Mammary epithelial cell (primary cell): ENCODE measurements at regions of chr3 and their contacts with region 1.

Region 1: DNA sequence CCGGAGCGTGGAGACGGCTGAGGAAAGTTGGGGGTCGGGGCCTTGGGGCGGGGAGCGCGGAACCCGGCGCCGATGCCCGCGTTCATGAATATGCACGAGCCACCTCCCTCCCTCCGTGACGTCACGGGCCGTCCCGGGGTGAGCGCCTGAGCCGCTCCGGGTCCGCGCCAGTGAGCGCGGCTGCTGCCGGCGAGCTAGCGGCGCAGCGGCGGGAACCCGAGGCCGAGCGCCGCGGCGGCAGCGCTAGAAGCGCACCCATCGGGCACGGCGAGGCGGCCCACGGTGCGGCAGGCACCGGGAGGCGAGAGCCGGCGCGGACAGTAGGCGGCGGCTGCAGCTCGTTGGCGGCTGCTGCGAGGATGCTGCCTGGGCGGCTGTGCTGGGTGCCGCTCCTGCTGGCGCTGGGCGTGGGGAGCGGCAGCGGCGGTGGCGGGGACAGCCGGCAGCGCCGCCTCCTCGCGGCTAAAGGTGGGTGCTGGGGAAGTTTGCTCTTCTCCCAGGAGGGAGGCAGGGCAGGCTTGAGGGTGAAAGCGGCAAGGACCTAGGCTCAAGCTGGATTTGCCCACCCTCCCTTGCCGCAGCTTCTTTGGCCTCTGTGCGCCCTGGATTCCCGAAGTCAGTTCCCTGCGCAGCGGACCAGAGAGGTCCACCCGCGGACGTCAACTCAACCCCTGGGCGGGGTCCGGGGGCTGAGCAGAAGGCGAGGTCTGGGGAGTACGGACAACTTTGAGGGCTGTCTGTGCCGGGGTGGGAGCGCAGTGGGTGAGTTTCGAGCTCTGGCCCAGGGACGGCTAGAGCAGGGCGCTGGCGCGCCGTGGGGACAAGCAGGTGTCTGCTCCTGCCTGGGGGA is at the start of gene CLSTN2:
- DNase-seq: peak; percentile 59
- H3K4me3 ChIP-seq: peak within 1 kb of the TSS; percentile 24 to 37 (median 33)
- H3K27ac ChIP-seq: no peak within 1 kb of the TSS
- H3K4me1 ChIP-seq: peaks cover 15% of the 10 kb centered on the region
- H3K27me3 ChIP-seq: peaks cover 7% of the 10 kb centered on the region
- CTCF ChIP-seq: no peak
- total RNA-seq, gene CLSTN2: 0.16 to 2.0 TPM

Region 2: DNA sequence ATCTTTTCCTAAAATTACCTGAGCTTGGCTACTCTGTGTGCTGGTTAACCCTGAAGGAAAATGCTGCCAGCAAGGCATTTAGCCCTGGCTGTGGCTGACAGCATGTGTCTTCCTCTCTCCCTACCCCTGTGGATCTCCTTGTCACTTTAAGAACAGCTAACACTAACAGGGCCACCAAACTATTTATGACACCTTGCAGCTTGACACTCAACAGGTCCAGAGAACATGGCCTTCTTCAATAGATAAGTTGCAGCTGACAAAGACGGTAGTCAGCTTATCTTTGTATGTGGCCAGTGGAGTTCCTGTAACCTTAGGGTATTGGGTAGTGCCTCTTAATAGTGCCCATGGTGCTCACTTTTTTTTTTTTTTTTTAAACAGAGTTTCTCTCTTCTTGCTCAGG is 513.8 kb before region 1 on chr3:
- CTCF ChIA-PET with region 1: interaction called, 20 read pairs
- dilution Hi-C with region 1: no loop called
- in situ Hi-C with region 1: no loop called
- intact Hi-C with region 1: no loop called
- DNase-seq: no peak
- H3K4me3 ChIP-seq: no peak overlapping the region
- H3K27ac ChIP-seq: no peak overlapping the region
- H3K4me1 ChIP-seq: no peaks in the 10 kb centered on the region
- H3K27me3 ChIP-seq: no peaks in the 10 kb centered on the region
- CTCF ChIP-seq: no peak

Region 3: DNA sequence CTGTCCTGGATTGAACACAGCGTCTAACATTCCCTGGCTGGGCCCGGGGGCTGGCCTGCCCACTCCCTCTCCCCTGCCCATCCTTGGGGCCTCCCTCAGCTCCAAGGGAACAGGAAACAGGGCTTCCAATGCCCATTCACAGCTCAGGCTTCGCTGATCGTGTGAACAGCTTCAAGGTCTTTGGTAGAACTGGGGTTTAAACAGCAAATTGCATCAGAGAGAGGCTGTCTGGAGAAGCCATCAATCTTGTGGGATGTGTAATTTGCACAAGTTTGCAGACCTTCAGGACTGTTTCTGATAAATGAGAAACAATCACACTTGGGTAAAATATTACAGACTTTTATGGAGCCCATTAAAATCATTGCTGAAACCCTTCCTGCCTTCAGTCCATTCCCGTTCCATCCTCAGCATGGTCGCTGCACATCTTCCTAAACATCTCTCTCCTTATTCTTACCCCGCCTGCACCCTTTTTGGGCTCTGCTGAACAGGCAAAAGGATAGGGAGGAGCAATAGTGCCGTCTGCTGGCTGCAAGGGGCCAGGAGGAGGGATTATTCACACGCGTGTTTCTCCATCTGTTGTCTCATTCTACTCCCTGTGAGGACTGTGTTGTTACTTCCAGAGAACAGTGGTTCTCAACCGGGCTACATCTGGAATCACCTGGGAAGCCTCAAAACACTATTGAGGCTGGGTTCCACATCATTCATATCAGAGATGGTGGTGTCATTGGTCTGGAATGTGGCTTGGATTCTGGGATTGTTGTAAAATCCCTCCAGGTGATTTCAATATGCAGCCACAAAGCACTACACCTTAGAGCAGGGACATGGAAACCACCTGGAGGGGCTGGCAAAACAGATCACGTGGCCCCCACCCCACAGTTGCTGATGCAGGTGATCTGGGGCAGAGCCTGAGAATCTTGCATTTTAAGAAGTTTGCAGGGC is 116.0 kb after region 1 on chr3:
- CTCF ChIA-PET with region 1: no interaction called
- dilution Hi-C with region 1: no loop called
- in situ Hi-C with region 1: no loop called
- intact Hi-C with region 1: loop called (anchors 1 kb)
- DNase-seq: peak; percentile 12
- H3K4me3 ChIP-seq: no peak overlapping the region
- H3K27ac ChIP-seq: no peak overlapping the region
- H3K4me1 ChIP-seq: peaks cover 3% of the 10 kb centered on the region
- H3K27me3 ChIP-seq: no peaks in the 10 kb centered on the region
- CTCF ChIP-seq: peak; percentile 56 to 75

Region 4: GRCh38 chr3:140216249-140216648 is 281.0 kb after region 1 on chr3:
- CTCF ChIA-PET with region 1: no interaction called
- dilution Hi-C with region 1: no loop called
- in situ Hi-C with region 1: no loop called
- intact Hi-C with region 1: loop called (anchors 1 kb)
- DNase-seq: peak; percentile 4
- H3K4me3 ChIP-seq: no peak overlapping the region
- H3K27ac ChIP-seq: no peak overlapping the region
- H3K4me1 ChIP-seq: no peaks in the 10 kb centered on the region
- H3K27me3 ChIP-seq: peaks cover 5% of the 10 kb centered on the region
- CTCF ChIP-seq: peak; percentile 70 to 84

Region 5: GRCh38 chr3:140552898-140553297 is 617.7 kb after region 1 on chr3:
- CTCF ChIA-PET with region 1: no interaction called
- dilution Hi-C with region 1: no loop called
- in situ Hi-C with region 1: no loop called
- intact Hi-C with region 1: loop called (anchors 1 kb)
- DNase-seq: peak; percentile 65
- H3K4me3 ChIP-seq: no peak overlapping the region
- H3K27ac ChIP-seq: no peak overlapping the region
- H3K4me1 ChIP-seq: no peaks in the 10 kb centered on the region
- H3K27me3 ChIP-seq: no peaks in the 10 kb centered on the region
- CTCF ChIP-seq: peak in 1 of 2 donors; percentile 13

Region 6: DNA sequence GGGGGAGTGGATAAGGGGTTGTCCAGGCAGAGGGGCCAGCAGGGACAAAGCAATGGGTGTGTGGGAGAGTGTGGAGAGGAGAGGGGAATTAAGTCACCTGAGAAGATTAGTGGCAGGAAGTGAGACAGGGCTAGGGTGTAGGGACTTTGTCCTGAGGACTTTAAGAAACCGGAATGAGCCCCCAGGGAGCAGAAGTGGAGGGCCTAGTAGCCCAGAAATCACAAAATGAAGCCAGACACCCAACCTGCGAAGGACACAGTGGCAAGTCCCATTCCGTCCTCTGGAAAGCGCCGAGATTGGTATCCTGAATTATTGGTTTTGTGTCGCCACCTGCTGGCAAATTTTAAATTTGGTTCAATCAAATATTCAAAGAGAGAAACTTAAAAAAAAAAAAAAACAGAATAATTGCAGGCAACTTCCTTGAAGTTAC is 928.4 kb after region 1 on chr3:
- CTCF ChIA-PET with region 1: no interaction called
- dilution Hi-C with region 1: loop called (anchors 5 kb)
- in situ Hi-C with region 1: loop called in 1 of 2 experiments (anchors 25 kb)
- intact Hi-C with region 1: loop called (anchors 5 kb)
- DNase-seq: peak; percentile 43
- H3K4me3 ChIP-seq: no peak overlapping the region
- H3K27ac ChIP-seq: no peak overlapping the region
- H3K4me1 ChIP-seq: no peaks in the 10 kb centered on the region
- H3K27me3 ChIP-seq: no peaks in the 10 kb centered on the region
- CTCF ChIP-seq: peak; percentile 38 to 48